CD8-positive, alpha-beta T cell (primary cell): ENCODE measurements at regions of chr1 and their contacts with region 1.

Region 1: DNA sequence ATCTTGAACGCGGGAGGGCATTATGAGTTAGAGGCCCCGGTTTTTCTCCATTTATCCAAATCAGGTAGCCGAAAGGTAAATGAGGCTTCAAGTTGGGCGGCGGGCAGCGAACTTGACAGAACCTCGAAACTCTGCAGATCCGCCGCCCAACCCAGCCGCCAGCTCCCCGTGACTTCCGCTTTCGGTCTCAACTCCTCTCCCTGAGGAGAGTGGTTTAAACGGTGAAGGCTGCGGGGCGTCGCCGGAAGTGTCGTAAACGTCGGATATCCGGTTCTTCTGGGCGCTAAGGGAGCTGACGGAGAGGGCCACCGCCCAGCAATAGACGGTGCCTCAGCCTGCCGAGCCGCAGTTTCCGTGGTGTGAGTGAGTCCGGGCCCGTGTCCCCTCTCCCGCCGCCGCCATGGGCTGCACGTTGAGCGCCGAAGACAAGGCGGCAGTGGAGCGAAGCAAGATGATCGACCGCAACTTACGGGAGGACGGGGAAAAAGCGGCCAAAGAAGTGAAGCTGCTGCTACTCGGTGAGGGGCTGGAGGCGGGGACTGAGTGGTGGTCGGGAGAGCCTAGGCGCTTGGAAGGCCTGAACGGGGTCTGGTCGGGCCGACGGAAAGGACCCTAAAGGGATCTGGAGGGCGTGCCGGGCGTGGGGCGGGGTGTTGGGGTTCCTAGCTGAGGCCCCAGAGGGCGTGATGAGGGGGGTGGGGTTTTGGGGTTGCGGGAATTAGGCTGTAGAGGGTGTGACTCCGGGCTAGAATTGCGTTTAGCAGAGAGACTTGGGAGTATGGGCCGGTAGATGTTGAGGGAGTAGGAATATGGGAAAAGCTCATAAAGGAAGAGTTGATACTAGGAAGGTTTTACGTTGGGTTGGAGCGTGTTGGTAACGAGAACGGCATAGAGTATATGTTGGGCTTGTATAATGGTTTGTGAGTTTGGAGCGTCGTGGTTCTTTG is at the start of gene GNAI3:
- DNase-seq: peak; percentile 90 to 98 (median 96)
- ATAC-seq: peak; percentile 85
- H3K4me3 ChIP-seq: peak within 1 kb of the TSS; percentile 74 to 98
- H3K4me3 Mint-ChIP-seq: peak within 1 kb of the TSS; percentile 98
- H3K27ac ChIP-seq: peak within 1 kb of the TSS; percentile 89 to 97
- H3K27ac Mint-ChIP-seq: peak within 1 kb of the TSS; percentile 99
- H3K4me1 ChIP-seq: peaks cover 28% of the 10 kb centered on the region
- H3K4me1 Mint-ChIP-seq: peaks cover 60% of the 10 kb centered on the region
- H3K27me3 ChIP-seq: no peaks in the 10 kb centered on the region
- H3K27me3 Mint-ChIP-seq: no peaks in the 10 kb centered on the region
- CTCF ChIP-seq: no peak
- total RNA-seq, gene GNAI3: 6.8 to 7.1 TPM

Region 2: GRCh38 chr1:109075531-109076490 is 472.8 kb before region 1 on chr1 and contains the start of gene TAF13:
- CTCF ChIA-PET with region 1: no interaction called
- POLR2A ChIA-PET with region 1: no interaction called
- intact Hi-C with region 1: loop called in 1 of 2 experiments (anchors 5 kb)
- DNase-seq: peak; percentile 63 to 94 (median 86)
- ATAC-seq: peak; percentile 95
- H3K4me3 ChIP-seq: peak within 1 kb of the TSS; percentile 66 to 72
- H3K4me3 Mint-ChIP-seq: peak within 1 kb of the TSS; percentile 98
- H3K27ac ChIP-seq: peak within 1 kb of the TSS; percentile 93 to 97
- H3K27ac Mint-ChIP-seq: peak within 1 kb of the TSS; percentile 99
- H3K4me1 ChIP-seq: peaks cover 16% of the 10 kb centered on the region
- H3K4me1 Mint-ChIP-seq: peaks cover 23% of the 10 kb centered on the region
- H3K27me3 ChIP-seq: no peaks in the 10 kb centered on the region
- H3K27me3 Mint-ChIP-seq: no peaks in the 10 kb centered on the region
- CTCF ChIP-seq: no peak
- total RNA-seq, gene TAF13: 36.2 to 40.4 TPM

Region 3: GRCh38 chr1:109412551-109412950 is 136.0 kb before region 1 on chr1:
- CTCF ChIA-PET with region 1: no interaction called
- POLR2A ChIA-PET with region 1: no interaction called
- intact Hi-C with region 1: no loop called
- DNase-seq: no peak
- ATAC-seq: no peak
- H3K4me3 ChIP-seq: no peak overlapping the region
- H3K4me3 Mint-ChIP-seq: no peak overlapping the region
- H3K27ac ChIP-seq: no peak overlapping the region
- H3K27ac Mint-ChIP-seq: no peak overlapping the region
- H3K4me1 ChIP-seq: no peaks in the 10 kb centered on the region
- H3K4me1 Mint-ChIP-seq: peaks cover 47% of the 10 kb centered on the region
- H3K27me3 ChIP-seq: no peaks in the 10 kb centered on the region
- H3K27me3 Mint-ChIP-seq: no peaks in the 10 kb centered on the region
- CTCF ChIP-seq: no peak

Region 4: DNA sequence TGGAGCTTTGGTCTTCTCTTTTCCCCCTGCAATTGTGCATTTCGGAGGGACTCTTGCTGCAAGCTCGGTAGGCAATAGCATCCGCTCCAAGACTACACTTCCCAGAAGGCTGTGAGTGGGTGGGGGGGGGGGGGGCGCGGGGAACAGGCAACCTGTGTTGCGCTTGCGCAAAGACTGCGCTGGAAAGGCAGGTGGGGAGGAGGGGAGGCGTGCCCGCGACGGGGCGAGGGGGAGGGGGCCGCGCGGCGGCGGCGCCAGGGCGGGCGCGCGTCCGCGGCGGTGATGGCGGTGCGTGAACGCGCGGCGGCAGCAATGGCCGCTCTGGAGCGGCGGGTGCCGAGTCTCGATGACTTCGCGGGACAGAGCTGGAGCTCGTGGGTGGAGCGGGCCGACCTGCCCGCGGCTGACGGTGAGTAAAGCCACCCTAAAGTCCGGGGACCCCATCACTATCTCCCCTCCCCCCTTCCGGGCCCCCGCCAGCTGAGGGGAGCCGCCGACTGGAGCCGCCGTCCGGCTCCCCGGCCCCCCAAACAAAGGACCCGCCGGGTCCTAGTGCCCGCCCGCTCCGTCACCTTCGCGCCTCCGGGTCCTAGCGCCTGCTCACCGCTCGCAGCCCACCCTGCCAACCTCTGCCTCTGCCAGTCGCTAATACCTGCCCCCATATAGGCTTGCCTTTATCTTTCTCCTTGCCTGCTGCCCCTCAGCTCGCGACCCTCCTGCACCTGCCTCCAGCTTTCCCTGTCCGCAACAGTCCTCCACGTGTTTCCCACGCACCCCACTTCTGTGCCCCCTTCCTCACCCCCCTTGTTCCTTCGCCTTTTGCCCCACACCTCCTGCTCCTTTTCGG is 64.7 kb before region 1 on chr1 and contains the start of gene ATXN7L2:
- CTCF ChIA-PET with region 1: interaction called, 1,903 read pairs
- POLR2A ChIA-PET with region 1: interaction called, 22 read pairs
- intact Hi-C with region 1: no loop called
- DNase-seq: peak; percentile 87 to 97 (median 92)
- ATAC-seq: peak; percentile 81
- H3K4me3 ChIP-seq: peak within 1 kb of the TSS; percentile 78 to 90
- H3K4me3 Mint-ChIP-seq: peak within 1 kb of the TSS; percentile 94
- H3K27ac ChIP-seq: peak within 1 kb of the TSS; percentile 78 to 93
- H3K27ac Mint-ChIP-seq: peak within 1 kb of the TSS; percentile 91
- H3K4me1 ChIP-seq: peaks cover 22% of the 10 kb centered on the region
- H3K4me1 Mint-ChIP-seq: peaks cover 35% of the 10 kb centered on the region
- H3K27me3 ChIP-seq: no peaks in the 10 kb centered on the region
- H3K27me3 Mint-ChIP-seq: peaks cover 2% of the 10 kb centered on the region
- CTCF ChIP-seq: no peak
- total RNA-seq, gene ATXN7L2: 16.8 to 19.4 TPM

Region 5: DNA sequence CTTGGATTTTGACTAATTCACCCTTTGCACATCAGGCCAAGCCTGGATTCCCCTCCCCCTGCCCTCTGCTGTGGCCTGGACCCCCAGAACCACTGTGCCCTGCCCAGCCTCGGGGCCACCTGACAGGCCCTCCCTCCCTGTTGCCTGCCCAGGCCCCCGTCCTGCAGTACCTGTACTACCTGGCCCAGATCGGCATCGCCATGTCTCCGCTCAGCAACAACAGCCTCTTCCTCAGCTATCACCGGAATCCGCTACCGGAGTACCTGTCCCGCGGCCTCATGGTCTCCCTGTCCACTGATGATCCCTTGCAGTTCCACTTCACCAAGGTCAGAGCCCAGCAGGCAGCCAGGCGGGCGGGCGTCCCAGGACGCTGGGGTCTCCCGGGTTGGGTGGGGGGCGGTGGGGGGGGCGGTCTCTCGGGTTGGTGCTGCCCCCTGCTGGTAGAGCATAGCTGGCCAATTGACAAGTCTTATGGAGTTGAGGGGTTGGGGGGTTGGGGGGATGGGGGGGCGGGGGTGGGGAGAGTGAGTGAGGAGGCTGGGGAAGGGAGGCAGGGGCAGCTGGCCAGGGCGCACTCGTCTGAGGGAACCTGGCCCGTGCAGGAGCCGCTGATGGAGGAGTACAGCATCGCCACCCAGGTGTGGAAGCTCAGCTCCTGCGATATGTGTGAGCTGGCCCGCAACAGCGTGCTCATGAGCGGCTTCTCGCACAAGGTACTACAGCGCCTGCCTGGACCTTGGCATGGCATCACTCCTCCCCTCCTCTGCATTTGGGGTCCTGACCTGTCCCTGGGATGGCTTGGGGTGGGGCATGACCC is 81.7 kb after region 1 on chr1:
- CTCF ChIA-PET with region 1: interaction called, 152 read pairs
- POLR2A ChIA-PET with region 1: interaction called, 15 read pairs
- intact Hi-C with region 1: loop called (anchors 1 kb)
- DNase-seq: peak in 7 of 9 experiments; percentile 45 to 69 (median 55)
- ATAC-seq: peak; percentile 61
- H3K4me3 ChIP-seq: no peak overlapping the region
- H3K4me3 Mint-ChIP-seq: no peak overlapping the region
- H3K27ac ChIP-seq: no peak overlapping the region
- H3K27ac Mint-ChIP-seq: no peak overlapping the region
- H3K4me1 ChIP-seq: peaks cover 12% of the 10 kb centered on the region
- H3K4me1 Mint-ChIP-seq: peaks cover 12% of the 10 kb centered on the region
- H3K27me3 ChIP-seq: no peaks in the 10 kb centered on the region
- H3K27me3 Mint-ChIP-seq: no peaks in the 10 kb centered on the region
- CTCF ChIP-seq: peak; percentile 28

Region 6: DNA sequence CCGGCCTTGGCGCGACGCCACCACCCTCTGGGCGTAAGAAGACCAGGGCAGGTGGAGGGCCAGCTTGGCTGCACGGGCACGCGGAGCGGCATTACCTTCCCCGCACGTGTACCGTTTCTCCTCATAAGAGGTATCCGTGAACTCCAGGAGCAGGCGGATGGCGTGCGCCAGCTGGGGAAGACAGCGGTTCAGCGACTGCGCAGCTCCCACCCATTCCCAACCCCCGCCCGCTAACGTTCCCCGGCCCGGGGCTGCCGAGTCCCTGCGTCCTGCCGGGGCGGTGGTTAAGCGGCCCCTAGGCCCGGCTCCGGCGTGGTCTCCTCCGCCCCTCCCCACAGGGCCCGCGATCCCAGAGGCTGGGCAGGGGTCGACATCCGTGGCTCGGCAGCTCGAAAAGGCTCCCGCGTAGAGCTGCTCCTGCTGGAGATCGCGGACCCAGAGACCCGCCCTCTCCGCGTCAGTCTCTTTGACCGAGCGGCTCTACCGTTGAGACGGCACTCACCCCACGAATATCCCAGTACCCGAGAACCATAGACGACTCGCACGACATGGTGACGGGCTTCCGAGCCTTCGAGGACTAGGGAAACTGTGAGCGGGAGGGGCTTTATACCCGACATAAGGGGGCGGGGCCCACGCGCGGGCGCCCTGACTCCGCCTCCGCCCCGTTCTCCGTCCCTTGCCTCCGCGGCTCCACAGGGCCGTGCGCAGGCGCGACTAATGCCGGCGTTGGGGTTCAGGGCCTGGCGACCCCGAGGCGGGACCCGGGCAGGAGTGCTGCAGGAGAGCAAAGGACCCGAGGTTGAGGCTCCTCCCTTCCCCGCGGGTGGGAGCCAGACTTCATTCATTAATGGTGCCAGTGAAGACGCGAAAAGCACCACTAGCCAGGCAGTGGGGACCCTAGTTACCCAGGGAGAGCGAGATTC is 191.4 kb after region 1 on chr1:
- CTCF ChIA-PET with region 1: interaction called, 3 read pairs
- POLR2A ChIA-PET with region 1: interaction called, 4 read pairs
- intact Hi-C with region 1: loop called in 1 of 2 experiments (anchors 1 kb)
- DNase-seq: peak; percentile 59 to 91 (median 82)
- ATAC-seq: peak; percentile 97
- H3K4me3 ChIP-seq: peak overlapping the region; percentile 76 to 82
- H3K4me3 Mint-ChIP-seq: peak overlapping the region; percentile 92
- H3K27ac ChIP-seq: peak overlapping the region; percentile 49 to 58
- H3K27ac Mint-ChIP-seq: peak overlapping the region; percentile 89
- H3K4me1 ChIP-seq: peaks cover 13% of the 10 kb centered on the region
- H3K4me1 Mint-ChIP-seq: peaks cover 15% of the 10 kb centered on the region
- H3K27me3 ChIP-seq: peaks cover 0 to 2% of the 10 kb centered on the region in 2 experiments
- H3K27me3 Mint-ChIP-seq: peaks cover 3% of the 10 kb centered on the region
- CTCF ChIP-seq: no peak

Region 7: DNA sequence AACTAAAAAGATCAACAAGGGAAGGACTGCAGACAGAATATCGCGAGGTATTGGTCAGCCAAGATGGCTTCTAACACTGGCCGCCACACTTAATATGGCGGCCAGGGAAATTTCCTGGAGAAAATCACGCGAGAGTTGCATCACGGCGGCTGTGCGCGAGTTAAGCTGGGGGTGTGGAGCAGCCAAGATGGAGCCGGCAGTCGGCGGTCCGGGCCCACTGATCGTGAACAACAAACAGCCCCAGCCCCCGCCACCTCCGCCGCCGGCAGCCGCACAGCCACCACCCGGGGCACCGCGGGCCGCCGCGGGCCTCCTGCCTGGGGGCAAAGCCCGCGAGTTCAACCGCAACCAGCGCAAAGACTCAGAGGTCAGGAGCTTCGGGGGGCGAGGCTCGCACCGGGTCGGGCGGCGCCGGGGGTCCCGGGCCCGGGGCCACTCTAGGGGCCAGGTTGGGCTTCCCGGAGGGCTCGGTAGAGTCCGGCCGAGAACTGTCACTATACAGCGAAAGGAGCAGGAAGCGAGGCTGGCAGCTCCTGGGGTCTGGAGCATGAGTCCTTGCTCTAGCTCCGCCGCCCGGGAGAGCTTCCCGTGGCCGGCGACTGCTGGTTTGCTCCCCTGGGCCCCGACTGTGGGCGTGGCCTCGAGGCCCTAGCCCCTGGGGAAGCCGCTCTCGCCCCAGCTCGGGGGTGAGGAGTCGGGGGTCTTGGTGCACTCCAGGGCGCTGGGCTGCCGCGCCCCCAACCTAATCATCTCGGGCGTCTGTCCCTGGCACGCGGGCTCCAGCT is 486.0 kb after region 1 on chr1 and contains the start of gene STRIP1:
- CTCF ChIA-PET with region 1: interaction called, 3 read pairs
- POLR2A ChIA-PET with region 1: interaction called, 6 read pairs
- intact Hi-C with region 1: loop called (anchors 1 kb)
- DNase-seq: peak; percentile 83 to 97 (median 90)
- ATAC-seq: peak; percentile 94
- H3K4me3 ChIP-seq: peak within 1 kb of the TSS; percentile 77 to 89
- H3K4me3 Mint-ChIP-seq: peak within 1 kb of the TSS; percentile 98
- H3K27ac ChIP-seq: peak within 1 kb of the TSS; percentile 74 to 84
- H3K27ac Mint-ChIP-seq: peak within 1 kb of the TSS; percentile 96
- H3K4me1 ChIP-seq: peaks cover 36% of the 10 kb centered on the region
- H3K4me1 Mint-ChIP-seq: peaks cover 53% of the 10 kb centered on the region
- H3K27me3 ChIP-seq: no peaks in the 10 kb centered on the region
- H3K27me3 Mint-ChIP-seq: no peaks in the 10 kb centered on the region
- CTCF ChIP-seq: no peak
- total RNA-seq, gene STRIP1: 94.6 to 109 TPM